CD8-positive, alpha-beta T cell (primary cell): ENCODE measurements at regions of chr4 and their contacts with region 1.

Region 1: GRCh38 chr4:155929833-155930232 is 23.8 kb downstream of the CTSO start:
- DNase-seq: no peak
- ATAC-seq: no peak
- H3K4me3 ChIP-seq: no peak overlapping the region
- H3K4me3 Mint-ChIP-seq: no peak overlapping the region
- H3K27ac ChIP-seq: no peak overlapping the region
- H3K27ac Mint-ChIP-seq: no peak overlapping the region
- H3K4me1 ChIP-seq: no peaks in the 10 kb centered on the region
- H3K4me1 Mint-ChIP-seq: no peaks in the 10 kb centered on the region
- H3K27me3 ChIP-seq: no peaks in the 10 kb centered on the region
- H3K27me3 Mint-ChIP-seq: no peaks in the 10 kb centered on the region
- CTCF ChIP-seq: no peak

Region 2: GRCh38 chr4:154707877-154708276 is 1222.0 kb before region 1 on chr4:
- CTCF ChIA-PET with region 1: no interaction called
- POLR2A ChIA-PET with region 1: no interaction called
- intact Hi-C with region 1: loop called in 1 of 2 experiments (anchors 5 kb)
- DNase-seq: no peak
- ATAC-seq: no peak
- H3K4me3 ChIP-seq: no peak overlapping the region
- H3K4me3 Mint-ChIP-seq: no peak overlapping the region
- H3K27ac ChIP-seq: no peak overlapping the region
- H3K27ac Mint-ChIP-seq: no peak overlapping the region
- H3K4me1 ChIP-seq: no peaks in the 10 kb centered on the region
- H3K4me1 Mint-ChIP-seq: no peaks in the 10 kb centered on the region
- H3K27me3 ChIP-seq: no peaks in the 10 kb centered on the region
- H3K27me3 Mint-ChIP-seq: peaks cover 5% of the 10 kb centered on the region
- CTCF ChIP-seq: no peak